ENCODE measurements at regions of chr3 and their contacts with region 1.

Region 1: DNA sequence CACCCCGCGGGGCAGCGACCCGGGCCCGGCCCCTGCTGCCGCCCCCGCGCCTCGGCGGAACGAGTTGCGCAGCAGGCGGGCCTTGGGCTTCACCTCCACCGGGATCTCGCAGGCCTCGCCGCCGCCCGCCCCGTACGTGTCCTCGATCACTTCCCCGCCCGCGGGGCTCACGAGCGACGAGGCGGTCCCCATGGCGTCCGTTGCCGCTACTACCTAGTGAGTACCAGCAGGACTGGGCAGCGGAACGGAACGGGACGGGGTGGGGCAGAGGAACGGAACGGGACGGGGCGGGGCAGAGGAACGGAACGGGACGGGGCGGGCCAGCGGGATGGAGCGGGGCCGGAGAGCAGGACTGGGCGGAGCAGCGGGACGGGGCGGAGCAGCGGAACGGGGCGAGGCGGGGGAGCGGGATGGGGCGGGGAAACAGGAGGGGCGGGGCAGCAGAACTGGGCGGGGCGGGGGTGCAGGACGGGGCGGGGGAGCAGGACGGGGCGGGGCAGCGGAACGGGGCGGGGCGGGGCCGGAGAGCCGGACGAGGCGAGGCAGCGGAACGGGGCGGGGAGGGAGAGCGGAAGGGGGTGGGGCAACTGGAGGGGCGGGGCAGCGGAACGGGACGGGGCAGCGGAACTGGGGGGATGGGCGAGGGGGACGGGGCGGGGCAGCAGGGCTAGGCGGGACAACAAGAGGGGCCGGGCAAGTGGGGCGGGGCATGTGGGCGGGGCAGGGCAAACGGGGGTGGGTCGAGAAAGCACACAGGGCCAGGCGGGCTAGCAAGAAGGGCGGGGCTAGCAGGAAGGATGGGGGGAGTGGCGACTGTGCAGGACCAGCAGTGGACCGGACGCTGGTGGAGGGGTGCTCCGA is at the start of gene NPHP3:
- DNase-seq: peak; percentile 98 to 99 (median 98)
- ATAC-seq: peak; percentile 94 to 95
- H3K4me3 ChIP-seq: peak within 1 kb of the TSS; percentile 67
- H3K27ac ChIP-seq: peak within 1 kb of the TSS; percentile 80
- H3K4me1 ChIP-seq: peaks cover 4% of the 10 kb centered on the region
- H3K27me3 ChIP-seq: no peaks in the 10 kb centered on the region
- total RNA-seq, gene NPHP3: 12.1 to 15.6 (median 14.1) TPM

Region 2: GRCh38 chr3:132681421-132681820 is 41.0 kb before region 1 on chr3:
- intact Hi-C with region 1: no loop called
- DNase-seq: no peak
- ATAC-seq: no peak
- H3K4me3 ChIP-seq: no peak overlapping the region
- H3K27ac ChIP-seq: no peak overlapping the region
- H3K4me1 ChIP-seq: no peaks in the 10 kb centered on the region
- H3K27me3 ChIP-seq: no peaks in the 10 kb centered on the region

Region 3: GRCh38 chr3:133384331-133385027 is 662.1 kb after region 1 on chr3:
- intact Hi-C with region 1: loop called in 2 of 4 experiments (anchors 5 kb)
- DNase-seq: peak; percentile 70 to 86 (median 85)
- ATAC-seq: peak; percentile 87 to 90
- H3K4me3 ChIP-seq: no peak overlapping the region
- H3K27ac ChIP-seq: no peak overlapping the region
- H3K4me1 ChIP-seq: no peaks in the 10 kb centered on the region
- H3K27me3 ChIP-seq: no peaks in the 10 kb centered on the region

Region 4: DNA sequence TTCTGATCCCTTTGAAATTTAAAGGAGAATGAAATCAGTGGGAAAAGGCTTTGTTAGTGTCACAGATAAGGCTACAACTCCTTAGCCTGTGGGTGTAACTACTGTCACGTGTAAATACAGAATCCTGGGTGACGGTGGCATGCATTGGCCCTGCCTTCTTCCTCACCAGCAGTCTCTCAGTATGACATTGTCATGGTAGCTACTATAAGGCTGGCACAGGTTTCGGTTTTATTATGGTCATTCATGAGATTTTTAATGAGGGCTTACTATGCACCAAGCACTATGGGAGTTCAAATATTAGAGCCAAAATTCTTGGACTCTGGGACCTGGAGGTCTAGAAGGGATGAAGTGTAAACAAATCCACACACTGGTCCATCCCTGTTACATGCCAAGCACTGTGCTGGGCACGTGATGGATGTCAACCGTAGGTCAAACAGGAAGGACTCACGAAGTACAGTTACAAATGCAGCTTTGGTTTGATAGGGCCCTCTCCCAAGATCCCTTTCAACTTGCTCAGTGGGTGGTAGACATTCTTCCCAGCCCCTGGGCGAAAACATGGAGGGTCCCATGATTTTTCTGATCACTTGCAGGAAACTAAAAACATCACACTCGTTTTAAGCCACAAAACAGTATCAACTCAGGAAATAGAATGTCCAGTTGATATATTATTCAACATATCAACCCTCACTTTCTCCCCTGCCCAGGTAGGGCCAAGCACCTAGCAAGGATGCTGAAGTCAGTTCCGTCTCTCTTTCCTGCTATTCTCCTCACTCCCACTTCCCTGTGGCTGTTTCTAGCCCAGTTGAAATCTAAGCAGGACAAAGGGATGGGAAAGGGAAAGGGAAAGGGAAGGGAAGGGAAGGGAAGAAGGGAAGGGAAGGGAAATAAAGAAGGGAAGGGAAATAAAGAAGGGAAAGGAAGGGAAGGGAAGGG is 702.8 kb after region 1 on chr3:
- intact Hi-C with region 1: loop called in 3 of 4 experiments (anchors 5 kb)
- DNase-seq: no peak
- ATAC-seq: no peak
- H3K4me3 ChIP-seq: no peak overlapping the region
- H3K27ac ChIP-seq: no peak overlapping the region
- H3K4me1 ChIP-seq: peaks cover 3% of the 10 kb centered on the region
- H3K27me3 ChIP-seq: no peaks in the 10 kb centered on the region

Region 5: DNA sequence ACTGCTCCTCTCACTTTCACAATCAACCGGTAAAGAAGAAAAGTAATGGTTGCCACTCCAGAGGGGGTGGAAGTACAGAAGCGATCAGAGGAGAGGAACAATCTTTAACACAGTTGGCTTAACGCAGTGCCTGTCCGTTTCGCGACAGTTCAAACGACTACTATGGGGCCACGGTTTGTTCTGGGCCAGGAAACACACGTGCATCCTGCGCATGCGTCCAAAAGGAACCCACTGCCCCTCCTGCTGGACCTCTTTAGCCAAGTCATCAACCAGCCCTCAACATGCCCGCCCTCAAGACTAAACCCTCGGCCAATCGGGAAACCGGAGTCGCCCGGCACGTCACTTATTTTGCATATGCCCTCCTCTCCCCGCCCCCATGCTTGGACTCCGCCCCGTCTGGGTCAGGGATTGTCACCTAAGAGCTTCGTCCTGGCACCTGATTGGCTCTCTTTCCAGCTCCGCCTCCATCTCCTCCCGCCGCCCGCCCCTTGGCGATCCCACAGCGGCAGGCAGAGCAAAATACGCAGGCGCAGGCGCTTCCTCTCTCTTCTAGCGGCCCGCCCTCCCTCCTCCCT is 850.7 kb after region 1 on chr3:
- intact Hi-C with region 1: loop called in 2 of 4 experiments (anchors 10 kb)
- DNase-seq: peak; percentile 100
- ATAC-seq: peak; percentile 95 to 97
- H3K4me3 ChIP-seq: peak overlapping the region; percentile 95
- H3K27ac ChIP-seq: peak overlapping the region; percentile 80
- H3K4me1 ChIP-seq: peaks cover 6% of the 10 kb centered on the region
- H3K27me3 ChIP-seq: no peaks in the 10 kb centered on the region